Body of pancreas (tissue), 4 donors: ENCODE measurements at regions of chr6 and their contacts with region 1.

Region 1: GRCh38 chr6:36671687-36672380 is 6.7 kb upstream of the CDKN1A start:
- DNase-seq: no peak
- ATAC-seq: no peak
- H3K4me3 ChIP-seq: no peak overlapping the region
- H3K27ac ChIP-seq: no peak overlapping the region
- H3K4me1 ChIP-seq: peaks cover 25% of the 10 kb centered on the region
- H3K27me3 ChIP-seq: no peaks in the 10 kb centered on the region
- CTCF ChIP-seq: no peak
- POLR2A ChIP-seq: no peak

Region 2: GRCh38 chr6:36639171-36639808 is 32.5 kb before region 1 on chr6:
- intact Hi-C with region 1: loop called (anchors 5 kb)
- DNase-seq: no peak
- ATAC-seq: no peak
- H3K4me3 ChIP-seq: no peak overlapping the region
- H3K27ac ChIP-seq: no peak overlapping the region
- H3K4me1 ChIP-seq: peaks cover 26% of the 10 kb centered on the region
- H3K27me3 ChIP-seq: no peaks in the 10 kb centered on the region
- CTCF ChIP-seq: no peak
- POLR2A ChIP-seq: no peak